SK-N-SH (cell line): ENCODE measurements at regions of chr15 and their contacts with region 1.

Region 1: GRCh38 chr15:47987908-47988532 is 132.8 kb upstream of the SLC24A5 start:
- DNase-seq: peak; percentile 45
- H3K4me3 ChIP-seq: no peak overlapping the region; a peak in 1 of 4 replicates
- H3K27ac ChIP-seq: no peak overlapping the region
- H3K4me1 ChIP-seq: peaks cover 0 to 3% of the 10 kb centered on the region in 2 experiments; a peak in 2 of 4 replicates
- H3K27me3 ChIP-seq: no peaks in the 10 kb centered on the region
- CTCF ChIP-seq: peak; percentile 76
- EP300 ChIP-seq: no peak; a peak in 1 of 4 replicates
- RAD21 ChIP-seq: peak; percentile 98

Region 2: DNA sequence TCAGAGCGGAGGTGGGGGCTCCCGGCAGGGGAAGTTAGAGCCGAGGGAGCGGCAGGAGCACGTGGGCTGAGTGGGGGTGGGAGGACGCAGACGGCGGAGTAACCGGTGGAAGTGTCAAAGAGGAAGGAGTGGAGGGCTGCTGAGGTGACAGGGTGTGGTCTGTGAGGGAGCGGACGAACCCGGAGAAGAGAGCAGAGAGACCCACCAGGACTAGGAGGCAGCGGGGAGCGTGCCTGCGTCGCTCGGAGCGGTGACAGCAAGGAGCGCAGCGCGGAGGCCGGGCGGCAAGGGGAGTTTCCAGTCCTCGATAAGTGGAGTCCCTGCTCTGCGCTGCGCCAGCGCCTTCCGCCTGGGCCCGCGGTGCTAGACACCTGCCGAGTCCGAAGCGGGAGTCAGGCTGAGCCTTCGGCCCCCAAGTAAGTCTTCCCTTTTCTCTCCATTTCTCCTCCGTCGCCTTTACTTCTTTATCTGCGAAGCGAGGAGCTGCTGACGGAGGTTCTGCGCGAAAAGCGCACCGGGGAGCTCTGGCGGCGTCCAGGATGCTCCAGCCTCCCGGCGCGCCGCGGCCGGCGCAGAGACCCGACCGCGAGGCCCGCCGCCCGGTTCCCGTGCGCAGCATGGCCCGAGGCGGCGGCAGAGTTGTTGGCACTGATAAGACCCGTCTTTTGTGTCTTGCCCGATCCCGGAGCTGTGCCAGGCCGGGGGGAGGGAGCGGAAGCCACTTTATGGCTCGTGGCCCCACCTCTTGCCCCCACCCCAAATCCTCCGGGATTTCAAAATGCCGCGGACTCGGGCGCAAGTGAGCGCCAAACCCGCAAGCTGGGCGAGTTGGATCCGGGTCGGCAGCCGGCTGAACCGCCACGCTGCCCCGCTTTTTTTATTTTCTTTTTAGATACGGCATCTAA is 803.8 kb before region 1 on chr15:
- CTCF ChIA-PET with region 1: interaction called, 18 read pairs
- POLR2A ChIA-PET with region 1: no interaction called
- DNase-seq: peak; percentile 79
- H3K4me3 ChIP-seq: peak overlapping the region; percentile 52 to 58
- H3K27ac ChIP-seq: peak overlapping the region in 1 of 2 experiments; percentile 47; a peak in 1 of 4 replicates
- H3K4me1 ChIP-seq: peaks cover 0 to 4% of the 10 kb centered on the region in 2 experiments; a peak in 1 of 4 replicates
- H3K27me3 ChIP-seq: peaks cover 13% of the 10 kb centered on the region
- CTCF ChIP-seq: no peak
- EP300 ChIP-seq: no peak
- RAD21 ChIP-seq: no peak

Region 3: DNA sequence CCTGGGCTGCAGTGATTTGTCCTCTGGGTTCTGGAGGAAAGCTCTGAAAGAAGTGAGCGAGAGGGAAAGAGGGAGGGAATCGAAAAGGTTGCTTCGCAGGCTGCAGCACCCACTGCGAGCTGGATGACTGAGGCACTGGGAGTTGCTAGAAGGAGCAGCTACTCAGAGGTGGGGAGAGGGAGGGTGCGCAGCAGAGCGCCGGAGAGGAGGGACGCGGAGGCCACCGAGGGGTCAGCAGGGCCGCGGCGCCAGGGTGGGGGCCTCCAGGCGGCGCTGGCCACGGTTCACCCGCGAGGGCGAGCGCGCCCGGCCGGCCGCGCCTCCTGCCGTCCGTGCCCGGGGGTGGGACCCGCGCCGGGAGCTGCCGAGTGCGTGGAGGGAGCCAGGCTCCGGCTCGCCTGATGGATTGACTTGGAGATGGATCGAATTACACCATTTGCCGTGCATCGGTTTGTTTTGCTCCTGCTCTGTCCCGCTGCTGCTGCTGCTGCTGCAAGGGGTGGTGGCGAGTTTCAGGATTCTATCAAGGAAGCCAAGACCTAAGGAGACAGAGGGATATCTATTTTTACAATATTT is 270.9 kb before region 1 on chr15 and contains the start of gene SEMA6D:
- CTCF ChIA-PET with region 1: interaction called, 40 read pairs
- POLR2A ChIA-PET with region 1: interaction called, 7 read pairs
- DNase-seq: peak; percentile 93
- H3K4me3 ChIP-seq: peak within 1 kb of the TSS; percentile 45 to 64
- H3K27ac ChIP-seq: peak within 1 kb of the TSS in 1 of 2 experiments; percentile 11; a peak in 1 of 4 replicates
- H3K4me1 ChIP-seq: peaks cover 6 to 8% of the 10 kb centered on the region in 2 experiments; a peak in 3 of 4 replicates
- H3K27me3 ChIP-seq: peaks cover 57% of the 10 kb centered on the region
- CTCF ChIP-seq: peak; percentile 33
- EP300 ChIP-seq: no peak
- RAD21 ChIP-seq: peak; percentile 42
- polyA plus RNA-seq, gene SEMA6D: 0.30 and 0.47 TPM in 2 replicates

Region 4: GRCh38 chr15:47820780-47821319 is 167.2 kb before region 1 on chr15:
- CTCF ChIA-PET with region 1: interaction called, 14 read pairs
- POLR2A ChIA-PET with region 1: no interaction called
- DNase-seq: no peak
- H3K4me3 ChIP-seq: no peak overlapping the region
- H3K27ac ChIP-seq: peak overlapping the region in 1 of 2 experiments; percentile 34; a peak in 1 of 4 replicates
- H3K4me1 ChIP-seq: peaks cover 0 to 37% of the 10 kb centered on the region in 2 experiments; a peak in 2 of 4 replicates
- H3K27me3 ChIP-seq: no peaks in the 10 kb centered on the region
- CTCF ChIP-seq: no peak
- EP300 ChIP-seq: peak in 1 of 2 experiments; percentile 86; a peak in 2 of 4 replicates
- RAD21 ChIP-seq: no peak; the same call in 1 of the 2 replicates

Region 5: GRCh38 chr15:48084759-48085590 is 97.0 kb after region 1 on chr15:
- CTCF ChIA-PET with region 1: interaction called, 14 read pairs
- POLR2A ChIA-PET with region 1: no interaction called
- DNase-seq: peak; percentile 26
- H3K4me3 ChIP-seq: no peak overlapping the region
- H3K27ac ChIP-seq: no peak overlapping the region; a peak in 1 of 4 replicates
- H3K4me1 ChIP-seq: peaks cover 0 to 17% of the 10 kb centered on the region in 2 experiments; a peak in 1 of 4 replicates
- H3K27me3 ChIP-seq: no peaks in the 10 kb centered on the region; the same call in 1 of the 2 replicates
- CTCF ChIP-seq: peak; percentile 47
- EP300 ChIP-seq: no peak
- RAD21 ChIP-seq: peak; percentile 72